PC-9 (cell line): ENCODE measurements at regions of chr3 and their contacts with region 1.

Region 1: DNA sequence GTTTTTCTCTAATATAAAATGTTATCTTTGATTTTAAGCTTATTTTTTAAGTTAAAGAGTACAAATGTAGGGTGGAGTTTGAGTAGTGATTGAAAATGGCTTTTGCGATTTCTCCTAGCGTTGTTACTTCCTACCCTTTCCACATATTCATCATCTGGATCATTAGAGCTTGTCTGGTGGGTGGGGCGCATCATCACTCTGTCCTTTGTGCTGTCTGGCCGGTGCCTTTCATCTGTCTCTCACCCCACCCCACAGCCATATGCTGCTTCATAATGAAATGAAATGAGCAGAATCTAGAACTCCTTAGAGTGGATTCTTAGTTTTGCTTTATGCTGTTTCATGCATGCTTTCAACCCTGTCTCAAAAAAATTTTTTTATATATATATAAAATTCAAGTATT is 44.3 kb downstream of the ATP1B3 start:
- DNase-seq: no peak
- H3K4me3 ChIP-seq: no peak overlapping the region
- H3K27ac ChIP-seq: no peak overlapping the region
- H3K4me1 ChIP-seq: no peaks in the 10 kb centered on the region
- H3K27me3 ChIP-seq: no peaks in the 10 kb centered on the region
- CTCF ChIP-seq: no peak

Region 2: DNA sequence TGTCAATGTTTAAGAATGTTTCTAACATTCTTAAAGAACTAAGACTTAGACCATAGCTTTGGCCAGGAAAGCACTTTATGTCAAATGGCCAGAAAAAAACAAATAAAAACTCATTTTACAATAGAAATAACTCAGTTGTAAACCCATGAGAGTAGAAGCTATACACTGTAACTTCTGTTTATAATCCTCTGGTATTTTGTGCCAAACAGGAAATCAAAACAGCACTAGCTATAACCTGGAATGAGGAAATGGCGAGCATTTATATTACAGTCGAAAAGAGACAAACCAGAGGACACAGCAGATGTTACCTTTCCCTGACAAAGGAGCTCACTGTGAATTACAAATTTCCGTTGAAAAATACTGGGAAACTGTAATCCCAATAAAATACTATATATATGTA is 294.4 kb after region 1 on chr3:
- CTCF ChIA-PET with region 1: no interaction called
- POLR2A ChIA-PET with region 1: interaction called, 27 read pairs
- intact Hi-C with region 1: no loop called
- DNase-seq: no peak
- H3K4me3 ChIP-seq: no peak overlapping the region
- H3K27ac ChIP-seq: no peak overlapping the region
- H3K4me1 ChIP-seq: no peaks in the 10 kb centered on the region
- H3K27me3 ChIP-seq: no peaks in the 10 kb centered on the region
- CTCF ChIP-seq: no peak